Activated B cell treated with CpG ODN at 0.5 μM for 24 hours (primary cell): ENCODE measurements at regions of chr4 and their contacts with region 1.

Region 1: GRCh38 chr4:87848622-87849351 is 16.0 kb downstream of the MEPE start:
- DNase-seq: no peak
- ATAC-seq: peak; percentile 70
- H3K4me3 Mint-ChIP-seq: no peak overlapping the region
- H3K27ac Mint-ChIP-seq: no peak overlapping the region
- H3K4me1 Mint-ChIP-seq: peaks cover 5% of the 10 kb centered on the region
- H3K27me3 Mint-ChIP-seq: peaks cover 12% of the 10 kb centered on the region
- CTCF ChIP-seq: no peak

Region 2: DNA sequence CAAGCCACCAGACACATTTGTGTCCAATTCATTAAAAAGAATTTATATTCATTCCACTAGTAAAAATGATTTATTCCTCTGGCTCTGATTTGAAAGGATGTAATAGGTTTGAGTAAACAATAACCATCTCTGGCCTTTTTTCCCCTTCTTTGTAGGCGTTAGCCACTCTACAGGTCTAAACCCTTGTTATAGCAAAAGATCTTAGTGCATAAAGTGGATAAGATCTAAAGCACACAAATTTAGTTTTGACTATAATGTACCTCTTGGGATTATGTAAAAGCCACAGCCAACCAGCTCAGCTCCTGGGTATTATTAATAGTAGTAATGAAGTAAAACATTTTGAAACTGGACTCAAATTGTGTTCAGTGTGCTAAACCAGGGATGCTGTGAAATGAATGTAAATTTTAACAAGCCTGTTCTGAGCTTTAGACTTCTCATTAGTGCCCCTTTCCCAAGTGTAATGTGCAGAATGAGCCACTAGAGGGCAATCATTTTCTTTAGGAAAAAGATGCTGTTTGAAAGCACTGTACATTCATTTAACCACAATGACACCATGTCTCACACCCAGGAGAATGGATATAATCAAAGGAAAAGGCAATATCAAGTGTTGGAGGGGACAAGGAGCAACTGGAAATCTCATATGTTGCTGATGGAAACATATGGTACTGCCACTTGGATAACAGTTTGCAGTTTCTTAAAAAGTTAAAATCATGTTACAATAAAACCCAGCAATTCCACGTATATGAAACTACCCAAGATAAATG is 698.1 kb before region 1 on chr4:
- CTCF ChIA-PET with region 1: no interaction called
- POLR2A ChIA-PET with region 1: no interaction called
- intact Hi-C with region 1: loop called (anchors 2 kb)
- DNase-seq: no peak
- ATAC-seq: peak; percentile 77
- H3K4me3 Mint-ChIP-seq: no peak overlapping the region
- H3K27ac Mint-ChIP-seq: no peak overlapping the region
- H3K4me1 Mint-ChIP-seq: no peaks in the 10 kb centered on the region
- H3K27me3 Mint-ChIP-seq: no peaks in the 10 kb centered on the region
- CTCF ChIP-seq: peak; percentile 16

Region 3: GRCh38 chr4:87679449-87680169 is 169.2 kb before region 1 on chr4:
- CTCF ChIA-PET with region 1: interaction called, 3 read pairs
- POLR2A ChIA-PET with region 1: no interaction called
- intact Hi-C with region 1: loop called (anchors 1 kb)
- DNase-seq: no peak
- ATAC-seq: no peak
- H3K4me3 Mint-ChIP-seq: no peak overlapping the region
- H3K27ac Mint-ChIP-seq: no peak overlapping the region
- H3K4me1 Mint-ChIP-seq: no peaks in the 10 kb centered on the region
- H3K27me3 Mint-ChIP-seq: no peaks in the 10 kb centered on the region
- CTCF ChIP-seq: peak; percentile 61

Region 4: GRCh38 chr4:87938746-87939145 is 90.0 kb after region 1 on chr4:
- CTCF ChIA-PET with region 1: no interaction called
- POLR2A ChIA-PET with region 1: no interaction called
- intact Hi-C with region 1: no loop called
- DNase-seq: no peak
- ATAC-seq: no peak
- H3K4me3 Mint-ChIP-seq: no peak overlapping the region
- H3K27ac Mint-ChIP-seq: no peak overlapping the region
- H3K4me1 Mint-ChIP-seq: no peaks in the 10 kb centered on the region
- H3K27me3 Mint-ChIP-seq: no peaks in the 10 kb centered on the region
- CTCF ChIP-seq: no peak

Region 5: GRCh38 chr4:88158489-88159243 is 309.9 kb after region 1 on chr4 and contains the start of gene ABCG2:
- CTCF ChIA-PET with region 1: no interaction called
- POLR2A ChIA-PET with region 1: no interaction called
- intact Hi-C with region 1: no loop called
- DNase-seq: peak; percentile 26
- ATAC-seq: peak; percentile 79
- H3K4me3 Mint-ChIP-seq: peak within 1 kb of the TSS; percentile 72
- H3K27ac Mint-ChIP-seq: no peak within 1 kb of the TSS
- H3K4me1 Mint-ChIP-seq: peaks cover 13% of the 10 kb centered on the region
- H3K27me3 Mint-ChIP-seq: peaks cover 8% of the 10 kb centered on the region
- CTCF ChIP-seq: no peak
- total RNA-seq, gene ABCG2: 0.13 and 0.20 TPM in 2 replicates

Region 6: GRCh38 chr4:88211473-88212252 is 362.9 kb after region 1 on chr4:
- CTCF ChIA-PET with region 1: interaction called, 20 read pairs
- POLR2A ChIA-PET with region 1: no interaction called
- intact Hi-C with region 1: loop called (anchors 1 kb)
- DNase-seq: no peak
- ATAC-seq: peak; percentile 37
- H3K4me3 Mint-ChIP-seq: no peak overlapping the region
- H3K27ac Mint-ChIP-seq: no peak overlapping the region
- H3K4me1 Mint-ChIP-seq: no peaks in the 10 kb centered on the region
- H3K27me3 Mint-ChIP-seq: peaks cover 7% of the 10 kb centered on the region
- CTCF ChIP-seq: peak; percentile 21

Region 7: GRCh38 chr4:89024051-89024675 is 1175.4 kb after region 1 on chr4:
- CTCF ChIA-PET with region 1: no interaction called
- POLR2A ChIA-PET with region 1: no interaction called
- intact Hi-C with region 1: loop called (anchors 10 kb)
- DNase-seq: no peak
- ATAC-seq: peak; percentile 89
- H3K4me3 Mint-ChIP-seq: no peak overlapping the region
- H3K27ac Mint-ChIP-seq: no peak overlapping the region
- H3K4me1 Mint-ChIP-seq: no peaks in the 10 kb centered on the region
- H3K27me3 Mint-ChIP-seq: no peaks in the 10 kb centered on the region
- CTCF ChIP-seq: no peak